Activated CD8-positive, alpha-beta T cell treated with anti-CD3 and anti-CD28 coated beads for 36 hours (primary cell): ENCODE measurements at regions of chr1 and their contacts with region 1.

Region 1: GRCh38 chr1:45339789-45340570 is at the starts of genes MUTYH and TOE1:
- DNase-seq: peak; percentile 97
- ATAC-seq: peak; percentile 87
- H3K4me3 Mint-ChIP-seq: peak within 1 kb of the TSS; percentile 99
- H3K27ac Mint-ChIP-seq: peak within 1 kb of the TSS; percentile 99
- H3K4me1 Mint-ChIP-seq: peaks cover 37% of the 10 kb centered on the region
- H3K27me3 Mint-ChIP-seq: no peaks in the 10 kb centered on the region
- CTCF ChIP-seq: no peak
- total RNA-seq, gene MUTYH: 51.4 to 54.5 TPM
- total RNA-seq, gene TOE1: 25.7 to 28.1 TPM

Region 2: GRCh38 chr1:45282351-45282750 is 57.6 kb before region 1 on chr1:
- CTCF ChIA-PET with region 1: no interaction called
- POLR2A ChIA-PET with region 1: no interaction called
- intact Hi-C with region 1: no loop called
- DNase-seq: no peak
- ATAC-seq: no peak
- H3K4me3 Mint-ChIP-seq: no peak overlapping the region
- H3K27ac Mint-ChIP-seq: no peak overlapping the region
- H3K4me1 Mint-ChIP-seq: no peaks in the 10 kb centered on the region
- H3K27me3 Mint-ChIP-seq: peaks cover 3% of the 10 kb centered on the region
- CTCF ChIP-seq: no peak

Region 3: GRCh38 chr1:45326627-45327623 is 13.1 kb before region 1 on chr1 and contains the start of gene HPDL:
- CTCF ChIA-PET with region 1: interaction called, 13 read pairs
- POLR2A ChIA-PET with region 1: interaction called, 238 read pairs
- intact Hi-C with region 1: no loop called
- DNase-seq: peak; percentile 89
- ATAC-seq: peak; percentile 94
- H3K4me3 Mint-ChIP-seq: peak within 1 kb of the TSS; percentile 88
- H3K27ac Mint-ChIP-seq: peak within 1 kb of the TSS; percentile 87
- H3K4me1 Mint-ChIP-seq: peaks cover 11% of the 10 kb centered on the region
- H3K27me3 Mint-ChIP-seq: no peaks in the 10 kb centered on the region
- CTCF ChIP-seq: no peak
- total RNA-seq, gene HPDL: 37.5 to 39.8 TPM

Region 4: GRCh38 chr1:45499415-45499769 is 159.4 kb after region 1 on chr1:
- CTCF ChIA-PET with region 1: interaction called, 5 read pairs
- POLR2A ChIA-PET with region 1: interaction called, 20 read pairs
- intact Hi-C with region 1: no loop called
- DNase-seq: peak; percentile 39
- ATAC-seq: no peak
- H3K4me3 Mint-ChIP-seq: peak overlapping the region; percentile 98
- H3K27ac Mint-ChIP-seq: peak overlapping the region; percentile 93
- H3K4me1 Mint-ChIP-seq: peaks cover 29% of the 10 kb centered on the region
- H3K27me3 Mint-ChIP-seq: no peaks in the 10 kb centered on the region
- CTCF ChIP-seq: peak; percentile 28